Activated CD4-positive, alpha-beta memory T cell treated with anti-CD3 and anti-CD28 coated beads for 36 hours (primary cell): ENCODE measurements at regions of chr2 and their contacts with region 1.

Region 1: DNA sequence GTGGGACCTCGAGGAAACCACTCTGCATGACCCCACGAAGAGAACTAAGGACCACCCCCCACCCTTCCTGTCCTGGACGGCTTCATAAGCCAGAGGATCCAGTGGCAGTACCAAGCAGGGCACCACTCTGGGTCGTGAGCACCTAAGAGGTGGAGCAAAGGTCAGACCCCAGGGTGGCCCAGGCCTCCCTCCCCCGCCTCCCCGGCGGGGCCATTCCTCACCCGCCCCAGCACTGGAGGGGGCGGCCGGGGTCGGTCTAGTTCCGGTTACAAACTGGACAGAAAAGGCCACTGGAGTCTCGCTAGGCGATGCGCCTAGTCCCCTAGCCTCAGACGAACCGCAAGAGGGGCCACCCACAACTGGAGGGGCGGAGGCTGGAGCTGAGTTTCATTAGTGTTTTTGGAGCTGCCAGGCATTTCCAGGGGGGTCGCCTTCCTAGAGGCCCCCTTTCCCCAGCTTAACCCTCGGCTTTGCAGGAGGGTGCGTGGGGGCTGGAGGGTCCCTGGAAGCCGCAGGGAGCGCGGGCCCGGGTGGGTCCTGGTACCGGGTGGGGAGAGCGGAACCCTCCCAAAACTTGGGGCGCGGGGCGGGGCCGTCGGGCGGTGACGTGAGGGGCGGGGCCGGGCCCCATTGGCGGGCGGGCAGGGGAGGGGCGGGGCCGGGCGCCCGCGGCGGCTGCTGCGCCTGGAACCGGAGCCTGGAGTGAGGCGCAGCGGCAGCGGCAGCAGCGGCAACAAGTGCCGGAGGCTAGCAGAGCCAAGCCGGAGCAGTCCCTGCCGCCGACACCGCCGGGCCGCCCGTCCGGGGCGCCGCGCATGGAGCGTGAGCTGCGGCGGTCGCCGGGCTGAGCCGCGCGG is at the start of gene B3GNT2:
- DNase-seq: peak; percentile 89
- H3K4me3 Mint-ChIP-seq: peak within 1 kb of the TSS; percentile 88
- H3K27ac Mint-ChIP-seq: peak within 1 kb of the TSS; percentile 96
- H3K4me1 Mint-ChIP-seq: peaks cover 28% of the 10 kb centered on the region
- H3K27me3 Mint-ChIP-seq: no peaks in the 10 kb centered on the region
- total RNA-seq, gene B3GNT2: 26.6 to 26.9 TPM

Region 2: DNA sequence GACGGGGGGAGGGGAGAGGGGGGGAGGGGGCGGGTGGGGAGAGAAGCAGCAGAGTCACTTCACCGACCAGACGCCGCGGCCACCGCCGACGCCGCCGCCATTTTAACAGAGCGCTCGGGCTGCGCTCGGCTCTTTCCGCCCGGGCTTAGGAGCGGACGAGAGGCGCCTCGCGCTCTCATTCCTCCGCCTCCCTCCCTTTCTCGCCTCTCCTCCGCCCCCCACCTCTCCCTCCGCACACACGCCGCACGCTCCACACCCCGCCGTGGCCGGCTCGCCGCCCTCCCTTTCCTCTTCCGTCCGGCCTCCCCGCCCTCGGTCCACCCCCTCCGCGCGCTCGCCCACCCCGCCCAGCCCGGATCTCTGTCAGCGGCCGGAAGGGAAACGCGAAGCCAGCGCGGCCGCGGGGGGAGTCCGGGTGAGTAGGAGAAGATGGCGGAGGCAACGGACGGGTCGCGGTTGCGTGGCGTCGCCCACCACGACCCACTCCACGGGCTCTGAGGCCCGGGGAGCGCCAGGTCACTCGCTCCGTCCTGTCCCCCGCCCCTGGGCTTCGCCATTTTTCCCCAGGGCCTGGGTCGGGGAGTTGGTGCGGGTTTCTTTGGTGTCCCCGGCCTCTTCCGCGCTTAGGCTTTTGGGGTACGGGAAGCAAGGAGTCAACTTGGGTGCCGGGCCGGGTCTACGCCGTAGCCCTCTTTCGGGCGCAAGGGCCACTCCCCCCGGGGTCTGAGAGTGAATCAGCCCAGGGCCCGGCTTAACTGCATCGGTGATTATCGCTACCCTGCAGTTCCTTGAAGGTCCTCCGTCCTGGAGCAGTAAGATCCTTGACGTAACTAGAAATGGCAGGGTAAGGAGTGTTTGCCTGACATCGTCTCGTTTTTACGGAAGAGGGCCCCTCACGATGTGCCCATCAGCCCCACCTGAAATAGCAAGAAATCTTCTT is 724.4 kb before region 1 on chr2 and contains the start of gene USP34:
- CTCF ChIA-PET with region 1: no interaction called
- POLR2A ChIA-PET with region 1: no interaction called
- intact Hi-C with region 1: loop called (anchors 5 kb)
- DNase-seq: peak; percentile 95
- H3K4me3 Mint-ChIP-seq: peak within 1 kb of the TSS; percentile 93
- H3K27ac Mint-ChIP-seq: peak within 1 kb of the TSS; percentile 94
- H3K4me1 Mint-ChIP-seq: peaks cover 27% of the 10 kb centered on the region
- H3K27me3 Mint-ChIP-seq: no peaks in the 10 kb centered on the region
- total RNA-seq, gene USP34: 61.1 to 69.4 TPM

Region 3: DNA sequence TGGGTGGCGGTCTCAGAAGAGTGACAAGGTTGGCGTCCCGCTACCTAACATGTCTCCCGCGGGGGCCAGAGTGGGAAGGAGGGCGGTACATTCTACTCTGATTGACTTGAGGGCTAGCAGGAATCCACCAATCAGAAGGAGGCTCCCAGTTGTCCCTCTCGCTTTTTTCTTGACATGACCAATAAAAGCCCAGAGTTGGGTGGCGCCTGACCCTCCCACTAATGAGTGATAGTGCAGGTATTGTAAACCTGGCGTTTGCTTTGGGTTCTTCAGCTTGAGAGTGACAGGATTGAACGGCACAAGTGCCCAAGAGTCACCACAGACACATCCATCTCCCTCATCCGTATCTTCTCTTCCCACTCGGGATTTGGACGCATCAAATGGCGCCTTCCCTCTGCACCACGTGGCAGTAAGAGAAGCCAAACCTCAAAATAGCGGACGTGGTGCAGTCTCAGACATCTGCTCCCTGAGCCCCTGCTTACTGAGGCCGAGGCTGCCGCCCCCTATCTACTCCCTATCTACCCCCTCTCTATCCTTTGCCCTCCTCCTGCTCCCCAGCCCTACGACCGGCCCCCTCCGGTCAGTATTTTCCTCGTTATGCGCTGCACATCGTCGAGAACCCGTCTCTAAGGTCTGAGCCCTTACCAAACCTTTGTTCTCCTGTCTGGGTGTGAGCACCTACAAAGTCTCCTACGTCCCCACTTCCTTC is 341.0 kb before region 1 on chr2:
- CTCF ChIA-PET with region 1: no interaction called
- POLR2A ChIA-PET with region 1: no interaction called
- intact Hi-C with region 1: loop called (anchors 1 kb)
- DNase-seq: peak; percentile 93
- H3K4me3 Mint-ChIP-seq: peak overlapping the region; percentile 91
- H3K27ac Mint-ChIP-seq: peak overlapping the region; percentile 90
- H3K4me1 Mint-ChIP-seq: peaks cover 19% of the 10 kb centered on the region
- H3K27me3 Mint-ChIP-seq: no peaks in the 10 kb centered on the region

Region 4: GRCh38 chr2:61905372-61906185 is 290.1 kb before region 1 on chr2 and contains the start of gene COMMD1:
- CTCF ChIA-PET with region 1: no interaction called
- POLR2A ChIA-PET with region 1: interaction called, 3 read pairs
- intact Hi-C with region 1: loop called (anchors 5 kb)
- DNase-seq: peak; percentile 91
- H3K4me3 Mint-ChIP-seq: peak within 1 kb of the TSS; percentile 93
- H3K27ac Mint-ChIP-seq: peak within 1 kb of the TSS; percentile 56
- H3K4me1 Mint-ChIP-seq: peaks cover 19% of the 10 kb centered on the region
- H3K27me3 Mint-ChIP-seq: no peaks in the 10 kb centered on the region
- total RNA-seq, gene COMMD1: 33.0 to 33.8 TPM

Region 5: DNA sequence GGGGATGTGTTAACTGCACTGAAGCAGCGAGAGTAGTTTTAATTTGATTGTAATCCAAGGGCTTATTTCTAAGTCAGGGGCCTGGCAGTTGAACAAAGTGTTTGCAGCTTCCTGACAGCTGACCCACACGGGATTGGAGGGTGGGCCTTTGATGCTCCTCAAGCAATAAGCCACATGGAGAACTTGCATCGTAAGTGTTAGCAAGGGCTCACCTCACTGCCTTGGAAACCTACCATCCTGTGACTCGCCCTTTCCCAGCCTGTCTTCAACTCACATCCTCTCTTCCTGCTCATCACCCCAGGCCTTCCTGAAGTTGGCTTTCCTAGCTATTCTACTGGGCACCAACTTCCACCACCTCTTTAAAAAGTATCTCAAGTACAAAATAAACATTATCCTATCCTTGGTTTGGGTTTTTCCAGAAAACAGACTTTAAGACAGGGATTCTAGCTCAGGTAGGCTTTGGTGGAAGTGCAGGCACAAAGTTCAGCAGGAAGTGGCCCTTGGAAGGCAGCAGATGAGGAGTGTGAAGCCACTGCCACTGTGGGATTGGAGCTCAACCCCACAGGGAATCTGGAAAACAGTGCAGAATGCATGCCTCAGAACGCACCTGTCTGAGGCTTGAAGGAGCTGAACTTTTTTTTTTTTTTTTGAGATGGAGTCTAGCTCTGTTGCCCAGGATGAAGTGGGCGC is 31.9 kb after region 1 on chr2:
- CTCF ChIA-PET with region 1: no interaction called
- POLR2A ChIA-PET with region 1: no interaction called
- intact Hi-C with region 1: no loop called
- DNase-seq: no peak
- H3K4me3 Mint-ChIP-seq: no peak overlapping the region
- H3K27ac Mint-ChIP-seq: peak overlapping the region; percentile 35
- H3K4me1 Mint-ChIP-seq: peaks cover 17% of the 10 kb centered on the region
- H3K27me3 Mint-ChIP-seq: no peaks in the 10 kb centered on the region

Region 6: DNA sequence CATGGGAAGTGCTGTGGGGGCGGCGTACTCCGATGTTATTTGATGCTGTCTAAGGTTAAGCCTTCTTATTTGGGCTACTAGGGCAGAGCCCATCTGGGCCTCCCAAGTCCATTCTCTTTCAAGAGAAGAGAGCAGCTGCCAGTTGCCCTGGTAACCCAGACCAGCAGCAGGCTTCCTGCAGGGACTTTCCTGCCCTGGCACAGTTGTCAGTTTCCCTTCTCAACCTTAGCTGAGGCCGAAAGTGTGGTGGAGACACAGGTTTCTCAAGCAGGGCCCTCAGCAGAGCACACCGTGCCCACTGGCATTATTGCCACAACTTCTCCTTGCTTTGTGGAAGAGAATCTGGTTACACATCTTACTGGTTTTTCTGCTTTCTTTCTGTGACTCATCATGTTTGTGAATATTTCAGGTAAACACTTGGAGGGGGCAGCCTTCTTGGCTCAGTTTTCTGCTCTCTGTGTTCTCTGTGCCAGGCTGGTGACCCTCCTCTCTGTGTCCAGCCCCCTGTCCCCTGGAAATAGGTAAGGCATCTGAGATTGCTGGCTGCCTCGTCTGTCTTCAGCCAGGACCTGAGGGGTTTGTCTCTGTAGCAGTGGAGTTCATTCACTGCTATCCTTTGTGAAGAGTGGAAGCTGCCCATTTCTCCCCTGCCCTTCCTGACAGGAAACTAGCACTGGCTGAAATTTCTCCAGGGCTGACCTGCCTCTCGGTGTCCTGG is 111.3 kb after region 1 on chr2:
- CTCF ChIA-PET with region 1: no interaction called
- POLR2A ChIA-PET with region 1: interaction called, 9 read pairs
- intact Hi-C with region 1: loop called (anchors 1 kb)
- DNase-seq: peak; percentile 73
- H3K4me3 Mint-ChIP-seq: peak overlapping the region; percentile 22
- H3K27ac Mint-ChIP-seq: peak overlapping the region; percentile 72
- H3K4me1 Mint-ChIP-seq: peaks cover 75% of the 10 kb centered on the region
- H3K27me3 Mint-ChIP-seq: no peaks in the 10 kb centered on the region

Region 7: DNA sequence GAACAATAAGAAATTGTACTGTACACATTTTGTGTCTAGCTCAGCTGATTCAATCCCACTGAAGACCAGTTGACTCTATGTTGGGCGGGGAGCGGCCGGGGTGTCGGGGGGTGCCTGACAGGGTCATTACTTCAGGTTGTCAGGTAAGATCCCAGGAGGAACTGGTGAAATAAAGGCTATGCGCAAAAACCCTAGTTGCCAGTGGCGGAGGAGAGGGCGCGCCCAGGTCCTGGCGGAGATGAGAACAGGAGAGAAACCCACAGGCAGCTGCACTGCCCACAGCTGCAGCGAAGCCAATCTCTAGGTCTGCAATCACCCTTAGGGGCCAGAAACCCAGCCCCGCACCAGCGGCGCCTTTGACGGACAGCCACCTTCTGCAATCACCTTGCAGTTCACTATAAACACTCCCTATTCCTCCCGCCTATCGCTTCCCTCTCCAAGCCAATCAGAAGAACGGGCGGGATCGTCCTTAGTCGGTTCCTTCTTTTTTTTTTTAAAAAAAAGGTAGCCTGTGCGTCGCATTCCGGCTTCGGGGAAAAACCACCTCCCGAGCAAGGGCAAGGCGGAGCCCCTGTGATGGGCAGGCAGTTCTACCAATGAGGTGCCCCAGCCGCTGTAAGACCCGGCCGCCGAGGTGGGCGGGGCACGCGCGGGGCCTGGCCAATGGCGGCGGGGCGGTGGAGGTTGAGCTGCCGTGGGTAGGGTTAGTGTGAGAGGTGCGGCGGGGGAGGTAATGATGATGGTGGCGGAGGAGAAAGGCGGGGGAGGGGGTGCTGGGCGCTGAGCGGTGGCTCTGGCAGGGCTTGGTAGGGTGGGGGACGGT is 509.6 kb after region 1 on chr2 and contains the start of gene EHBP1:
- CTCF ChIA-PET with region 1: interaction called, 4 read pairs
- POLR2A ChIA-PET with region 1: no interaction called
- intact Hi-C with region 1: loop called (anchors 2 kb)
- DNase-seq: peak; percentile 98
- H3K4me3 Mint-ChIP-seq: peak within 1 kb of the TSS; percentile 76
- H3K27ac Mint-ChIP-seq: peak within 1 kb of the TSS; percentile 74
- H3K4me1 Mint-ChIP-seq: peaks cover 28% of the 10 kb centered on the region
- H3K27me3 Mint-ChIP-seq: no peaks in the 10 kb centered on the region
- total RNA-seq, gene EHBP1: 23.5 to 23.6 TPM